Activated naive CD4-positive, alpha-beta T cell treated with anti-CD3 and anti-CD28 coated beads for 36 hours (primary cell): ENCODE measurements at regions of chr10 and their contacts with region 1.

Region 1: GRCh38 chr10:110414563-110415309 is 83.0 kb upstream of the DUSP5 start:
- DNase-seq: peak; percentile 98
- H3K4me3 Mint-ChIP-seq: peak overlapping the region; percentile 41
- H3K27ac Mint-ChIP-seq: peak overlapping the region; percentile 84
- H3K4me1 Mint-ChIP-seq: peaks cover 73% of the 10 kb centered on the region
- H3K27me3 Mint-ChIP-seq: no peaks in the 10 kb centered on the region

Region 2: DNA sequence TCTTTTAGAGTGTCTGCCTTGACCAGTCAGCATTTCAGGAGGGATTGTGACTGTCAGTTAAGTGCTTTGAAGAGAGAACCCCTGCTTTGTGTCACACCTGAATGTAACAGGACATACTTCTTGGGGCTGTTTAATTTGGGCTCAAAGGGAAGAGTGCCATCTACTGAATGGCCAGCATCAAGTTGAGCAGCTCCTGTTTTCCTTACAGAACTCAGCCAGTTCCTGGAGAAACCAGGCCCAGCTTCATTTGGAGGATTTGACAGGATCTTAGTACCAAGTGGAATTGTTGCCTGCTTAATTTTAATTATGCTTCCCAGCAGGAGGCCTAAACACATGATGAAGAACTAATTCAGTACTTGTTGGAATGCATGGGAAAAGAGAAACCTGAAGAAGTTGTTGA is 398.7 kb before region 1 on chr10:
- CTCF ChIA-PET with region 1: no interaction called
- intact Hi-C with region 1: no loop called
- DNase-seq: no peak
- H3K4me3 Mint-ChIP-seq: no peak overlapping the region
- H3K27ac Mint-ChIP-seq: peak overlapping the region; percentile 75
- H3K4me1 Mint-ChIP-seq: peaks cover 77% of the 10 kb centered on the region
- H3K27me3 Mint-ChIP-seq: no peaks in the 10 kb centered on the region

Region 3: GRCh38 chr10:110225756-110226542 is 188.8 kb before region 1 on chr10:
- CTCF ChIA-PET with region 1: no interaction called
- intact Hi-C with region 1: loop called (anchors 2 kb)
- DNase-seq: peak; percentile 93
- H3K4me3 Mint-ChIP-seq: peak overlapping the region; percentile 97
- H3K27ac Mint-ChIP-seq: peak overlapping the region; percentile 94
- H3K4me1 Mint-ChIP-seq: peaks cover 47% of the 10 kb centered on the region
- H3K27me3 Mint-ChIP-seq: no peaks in the 10 kb centered on the region

Region 4: GRCh38 chr10:110361800-110362456 is 52.8 kb before region 1 on chr10:
- CTCF ChIA-PET with region 1: no interaction called
- intact Hi-C with region 1: loop called (anchors 1 kb)
- DNase-seq: peak; percentile 65
- H3K4me3 Mint-ChIP-seq: no peak overlapping the region
- H3K27ac Mint-ChIP-seq: peak overlapping the region; percentile 50
- H3K4me1 Mint-ChIP-seq: peaks cover 80% of the 10 kb centered on the region
- H3K27me3 Mint-ChIP-seq: no peaks in the 10 kb centered on the region

Region 5: GRCh38 chr10:110387983-110388687 is 26.6 kb before region 1 on chr10:
- CTCF ChIA-PET with region 1: no interaction called
- intact Hi-C with region 1: no loop called
- DNase-seq: peak; percentile 54
- H3K4me3 Mint-ChIP-seq: no peak overlapping the region
- H3K27ac Mint-ChIP-seq: peak overlapping the region; percentile 84
- H3K4me1 Mint-ChIP-seq: peaks cover 28% of the 10 kb centered on the region
- H3K27me3 Mint-ChIP-seq: no peaks in the 10 kb centered on the region

Region 6: GRCh38 chr10:110444004-110444337 is 29.2 kb after region 1 on chr10:
- CTCF ChIA-PET with region 1: no interaction called
- intact Hi-C with region 1: no loop called
- DNase-seq: no peak
- H3K4me3 Mint-ChIP-seq: no peak overlapping the region
- H3K27ac Mint-ChIP-seq: no peak overlapping the region
- H3K4me1 Mint-ChIP-seq: peaks cover 9% of the 10 kb centered on the region
- H3K27me3 Mint-ChIP-seq: no peaks in the 10 kb centered on the region

Region 7: DNA sequence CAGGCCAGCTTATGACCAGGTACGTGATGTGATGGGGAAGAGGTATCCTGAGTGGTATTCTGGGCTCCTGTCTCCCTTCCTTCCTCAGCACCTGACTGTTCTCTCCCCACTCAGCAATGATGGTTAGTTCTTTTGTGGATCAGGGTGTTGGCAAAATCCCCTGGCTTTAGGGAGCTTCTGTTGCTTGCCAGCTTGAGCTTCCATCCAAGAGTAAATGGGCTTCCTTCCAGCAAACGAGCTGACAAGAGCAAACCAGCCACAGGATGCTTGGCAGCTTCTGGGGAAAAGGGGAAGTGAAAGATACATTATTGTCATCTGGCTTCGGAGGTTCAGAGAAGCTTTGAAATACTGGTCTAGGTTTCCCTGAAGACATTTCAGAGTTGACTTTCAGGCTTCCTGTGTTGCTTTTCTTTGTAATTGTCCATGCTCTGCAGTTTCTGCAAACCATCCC is 88.1 kb after region 1 on chr10:
- CTCF ChIA-PET with region 1: interaction called, 4 read pairs
- intact Hi-C with region 1: loop called (anchors 1 kb)
- DNase-seq: peak; percentile 66
- H3K4me3 Mint-ChIP-seq: peak overlapping the region; percentile 97
- H3K27ac Mint-ChIP-seq: peak overlapping the region; percentile 85
- H3K4me1 Mint-ChIP-seq: peaks cover 74% of the 10 kb centered on the region
- H3K27me3 Mint-ChIP-seq: no peaks in the 10 kb centered on the region

Region 8: GRCh38 chr10:110535958-110536891 is 121.5 kb after region 1 on chr10:
- CTCF ChIA-PET with region 1: no interaction called
- intact Hi-C with region 1: loop called (anchors 1 kb)
- DNase-seq: peak; percentile 90
- H3K4me3 Mint-ChIP-seq: no peak overlapping the region
- H3K27ac Mint-ChIP-seq: peak overlapping the region; percentile 54
- H3K4me1 Mint-ChIP-seq: peaks cover 22% of the 10 kb centered on the region
- H3K27me3 Mint-ChIP-seq: no peaks in the 10 kb centered on the region